A549 (cell line): ENCODE measurements at regions of chr2 and their contacts with region 1.

Region 1: GRCh38 chr2:232521959-232522622 is 1.9 kb downstream of the PRSS56 start:
- DNase-seq: peak; percentile 42 to 60
- ATAC-seq: peak; percentile 23 to 67; a peak in 3 of 6 replicates
- H3K4me3 ChIP-seq: peak overlapping the region; percentile 40
- H3K27ac ChIP-seq: peak overlapping the region in 1 of 2 experiments; percentile 74; a peak in 3 of 6 replicates
- H3K4me1 ChIP-seq: peaks cover 17% of the 10 kb centered on the region; the same call in 2 of the 3 replicates
- CTCF ChIP-seq: peak; percentile 97
- EP300 ChIP-seq: no peak
- POLR2A ChIP-seq: no peak
- RAD21 ChIP-seq: peak; percentile 77 to 94

Region 2: DNA sequence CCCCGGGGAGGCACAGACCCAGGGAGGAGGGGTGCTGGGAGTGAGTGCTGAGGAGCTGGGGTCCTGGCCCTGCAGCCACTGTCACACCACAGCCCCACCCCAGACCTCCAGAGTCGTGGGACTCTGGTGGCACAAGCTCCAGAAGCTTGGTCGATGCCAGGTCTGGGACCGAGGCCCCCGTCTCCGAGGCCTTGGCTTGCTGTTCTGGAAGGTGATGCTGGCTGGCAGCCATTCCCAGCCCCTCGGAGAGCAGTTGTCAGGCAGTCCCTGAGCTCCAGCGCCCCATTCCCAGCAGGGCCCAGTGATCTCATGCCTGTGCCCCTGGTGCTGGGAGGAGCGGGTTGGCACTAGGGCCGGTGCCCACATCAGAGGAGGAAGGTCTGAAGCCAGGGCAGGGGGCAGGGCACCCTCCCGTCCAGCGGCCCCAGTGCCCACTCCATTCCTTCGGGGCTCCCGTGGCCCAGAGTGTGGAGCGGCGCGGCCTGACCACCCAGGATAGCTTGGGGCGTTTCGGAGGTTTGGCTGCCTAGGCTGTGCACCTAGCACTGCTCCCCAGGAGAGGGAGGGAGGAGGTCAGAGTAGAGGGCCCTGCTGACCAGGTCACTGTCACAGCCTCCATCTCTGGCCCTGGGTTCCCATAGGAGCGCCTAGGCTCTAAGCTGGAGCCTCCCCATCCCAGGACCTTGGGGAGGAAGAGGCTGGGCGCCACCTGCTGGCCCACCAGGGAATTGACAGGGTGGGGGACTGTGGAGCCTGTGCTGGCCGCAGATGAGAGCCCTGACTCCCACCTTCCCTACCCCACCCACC is 82.9 kb before region 1 on chr2:
- CTCF ChIA-PET with region 1: interaction called, 39 read pairs
- POLR2A ChIA-PET with region 1: no interaction called
- DNase-seq: peak in 1 of 2 experiments; percentile 44
- ATAC-seq: peak; percentile 65 to 84
- H3K4me3 ChIP-seq: no peak overlapping the region
- H3K27ac ChIP-seq: no peak overlapping the region
- H3K4me1 ChIP-seq: peaks cover 11% of the 10 kb centered on the region
- CTCF ChIP-seq: peak; percentile 63
- EP300 ChIP-seq: no peak
- POLR2A ChIP-seq: no peak
- RAD21 ChIP-seq: peak; percentile 58 to 67

Region 3: GRCh38 chr2:232455426-232456255 is 66.5 kb before region 1 on chr2 and contains the start of gene ALPI:
- CTCF ChIA-PET with region 1: interaction called, 107 read pairs
- POLR2A ChIA-PET with region 1: interaction called, 3 read pairs
- DNase-seq: no peak
- ATAC-seq: no peak
- H3K4me3 ChIP-seq: no peak within 1 kb of the TSS
- H3K27ac ChIP-seq: no peak within 1 kb of the TSS
- H3K4me1 ChIP-seq: no peaks in the 10 kb centered on the region
- CTCF ChIP-seq: no peak
- EP300 ChIP-seq: no peak
- POLR2A ChIP-seq: no peak
- RAD21 ChIP-seq: no peak
- polyA plus RNA-seq, gene ALPI: 0.05 and 0.11 TPM in 2 replicates

Region 4: DNA sequence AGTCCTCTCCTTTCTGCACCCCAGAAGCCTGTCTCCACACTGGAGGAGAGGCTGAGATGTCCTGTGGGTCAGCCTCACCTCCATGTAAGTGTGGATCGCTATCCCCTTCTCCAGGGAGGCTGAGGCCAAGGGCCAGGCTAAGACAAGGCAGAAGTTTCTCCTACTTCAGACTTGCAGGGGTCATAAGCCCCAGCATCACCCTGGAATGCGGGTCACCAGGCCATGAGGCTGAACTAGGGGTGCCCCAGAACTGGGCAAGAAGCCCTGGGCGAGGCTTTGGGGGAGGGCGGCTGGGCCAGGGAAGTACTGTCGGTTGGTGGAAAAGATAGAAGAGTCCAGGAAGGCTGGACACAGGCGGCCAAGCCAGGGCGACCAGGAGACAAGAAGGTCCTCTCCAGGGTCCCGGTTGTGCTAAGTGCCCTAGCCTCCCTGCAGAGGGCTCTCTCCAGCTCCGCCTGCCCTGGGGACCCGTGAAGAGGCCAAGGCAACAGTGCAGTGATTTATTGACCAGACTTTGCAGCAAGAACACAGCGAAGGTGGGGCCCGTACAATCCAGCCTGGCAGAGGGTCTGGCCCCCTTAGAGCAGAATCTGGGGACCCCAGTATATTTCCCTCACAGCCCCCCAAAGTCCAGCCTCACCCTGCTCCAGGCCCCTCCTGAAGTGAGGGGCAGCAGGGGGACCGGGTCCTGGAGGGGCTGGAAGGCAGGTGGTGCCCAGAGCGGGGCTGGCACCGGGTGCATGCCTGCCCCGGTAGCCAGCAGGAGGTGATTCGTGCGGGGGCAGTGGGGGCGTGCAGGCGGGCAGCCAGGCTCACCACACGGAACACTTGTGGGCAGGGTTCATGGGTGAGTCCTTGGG is 42.5 kb before region 1 on chr2:
- CTCF ChIA-PET with region 1: interaction called, 19 read pairs
- POLR2A ChIA-PET with region 1: no interaction called
- DNase-seq: no peak
- ATAC-seq: peak; percentile 7 to 67; a peak in 3 of 6 replicates
- H3K4me3 ChIP-seq: no peak overlapping the region
- H3K27ac ChIP-seq: no peak overlapping the region
- H3K4me1 ChIP-seq: no peaks in the 10 kb centered on the region
- CTCF ChIP-seq: no peak
- EP300 ChIP-seq: no peak
- POLR2A ChIP-seq: no peak
- RAD21 ChIP-seq: no peak

Region 5: GRCh38 chr2:232511336-232511888 is 10.7 kb before region 1 on chr2:
- CTCF ChIA-PET with region 1: interaction called, 77 read pairs
- POLR2A ChIA-PET with region 1: no interaction called
- DNase-seq: no peak
- ATAC-seq: no peak
- H3K4me3 ChIP-seq: no peak overlapping the region
- H3K27ac ChIP-seq: no peak overlapping the region
- H3K4me1 ChIP-seq: peaks cover 1% of the 10 kb centered on the region; the same call in 2 of the 3 replicates
- CTCF ChIP-seq: no peak
- EP300 ChIP-seq: no peak
- POLR2A ChIP-seq: no peak
- RAD21 ChIP-seq: no peak

Region 6: DNA sequence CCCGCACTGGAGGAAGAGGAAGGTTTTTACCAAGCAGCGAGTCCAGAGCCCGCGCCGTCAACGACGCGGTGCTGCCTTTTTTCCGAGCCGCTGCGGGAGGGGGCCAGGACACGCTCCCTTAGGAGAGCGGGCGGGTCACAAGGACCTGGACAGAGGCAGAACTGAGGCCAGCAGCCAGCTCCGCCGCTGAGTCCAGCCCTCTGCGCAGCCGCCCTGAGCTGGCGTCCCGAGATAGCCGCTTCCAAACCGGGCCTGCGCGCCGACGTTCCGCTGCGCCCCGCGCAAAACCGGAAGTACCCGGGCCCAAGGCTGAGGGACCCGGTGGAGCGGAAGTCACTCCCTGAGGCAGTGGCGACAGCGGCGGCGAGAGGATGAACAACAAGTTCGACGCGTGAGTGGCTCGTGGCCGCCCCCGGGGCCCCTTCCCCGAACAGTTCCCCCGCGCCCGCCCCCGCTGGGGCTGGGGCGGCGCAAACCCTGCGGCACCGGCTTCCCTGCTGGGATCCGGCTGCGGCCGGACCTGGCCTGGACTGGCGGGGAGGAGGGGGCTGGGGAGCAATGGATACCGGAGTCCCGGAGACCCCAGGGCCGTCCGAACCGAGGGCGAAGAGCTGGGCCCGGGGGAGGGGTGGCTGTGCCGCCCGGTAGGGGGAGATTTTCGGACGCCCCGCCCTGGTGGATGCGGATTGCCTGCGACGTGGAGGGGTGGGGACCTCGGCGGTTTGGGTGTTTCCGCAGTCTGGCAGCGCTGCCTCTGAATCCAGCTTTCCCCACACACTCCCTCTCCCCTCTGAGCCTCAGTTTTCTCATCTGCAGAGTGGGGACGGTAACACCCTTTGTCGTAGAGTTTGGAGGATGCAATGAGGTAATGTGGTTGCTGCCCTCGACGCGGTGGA is 28.5 kb after region 1 on chr2 and contains the starts of genes EIF4E2 and TIGD1:
- CTCF ChIA-PET with region 1: interaction called, 7 read pairs
- POLR2A ChIA-PET with region 1: interaction called, 13 read pairs
- DNase-seq: peak; percentile 95 to 98
- ATAC-seq: peak; percentile 96 to 98
- H3K4me3 ChIP-seq: peak within 1 kb of the TSS; percentile 95
- H3K27ac ChIP-seq: peak within 1 kb of the TSS; percentile 99
- H3K4me1 ChIP-seq: peaks cover 5% of the 10 kb centered on the region; the same call in 2 of the 3 replicates
- CTCF ChIP-seq: no peak; the same call in 2 of the 3 replicates
- EP300 ChIP-seq: no peak
- POLR2A ChIP-seq: peak; percentile 91
- RAD21 ChIP-seq: no peak
- polyA plus RNA-seq, gene EIF4E2: 49.1 and 51.4 TPM in 2 replicates
- polyA plus RNA-seq, gene TIGD1: 7.4 and 10.5 TPM in 2 replicates